ENCODE measurements at regions of chr10 and their contacts with region 1.

Region 1: DNA sequence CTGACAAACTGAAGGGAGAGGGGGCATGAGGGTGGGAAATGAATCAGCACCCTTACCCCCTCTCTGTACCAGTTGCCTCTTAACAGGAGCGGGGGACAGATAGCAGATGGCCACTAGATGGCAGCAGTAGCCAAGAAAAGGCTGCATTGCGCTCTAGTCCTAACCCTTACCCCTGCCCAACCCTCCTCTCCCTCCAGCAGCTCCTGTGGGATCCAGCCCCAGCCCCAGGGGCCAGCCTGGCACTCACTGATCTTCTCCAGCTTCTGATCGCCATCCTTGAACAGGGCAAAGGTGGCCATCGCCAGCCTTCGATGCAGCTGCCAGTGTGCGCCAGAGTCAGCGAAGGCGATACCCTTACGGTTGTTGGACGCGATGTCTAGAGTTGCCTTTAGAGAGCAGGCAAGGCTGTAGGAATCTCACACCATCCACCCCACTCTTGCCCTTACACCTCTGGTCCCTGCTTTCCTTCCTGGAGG is 2.2 kb downstream of the CYP17A1 start:
- DNase-seq: peak; percentile 79 to 90
- H3K4me3 ChIP-seq: no peak overlapping the region
- H3K4me1 ChIP-seq: no peaks in the 10 kb centered on the region
- H3K27me3 ChIP-seq: no peaks in the 10 kb centered on the region

Region 2: DNA sequence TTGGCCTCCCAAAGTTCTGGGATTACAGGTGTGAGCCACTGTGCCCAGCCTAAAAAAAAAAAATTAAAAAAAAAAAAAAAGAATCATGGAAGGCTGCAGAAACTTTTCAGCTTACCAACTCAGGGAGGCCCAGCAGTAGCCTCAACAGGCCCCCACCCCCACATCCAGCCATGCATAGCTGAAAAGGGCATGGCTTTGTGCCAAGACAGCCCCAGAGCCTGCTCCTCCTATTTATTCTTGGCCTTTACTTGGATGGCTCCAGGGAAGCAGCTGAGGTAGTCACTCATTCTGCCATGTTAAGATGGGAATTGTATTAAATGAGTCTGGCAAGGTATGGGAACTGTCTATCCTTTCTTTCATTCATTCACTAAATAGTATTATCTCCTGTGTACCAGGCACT is 69.3 kb after region 1 on chr10:
- in situ Hi-C with region 1: loop called (anchors 5 kb)
- DNase-seq: no peak
- H3K4me3 ChIP-seq: no peak overlapping the region
- H3K4me1 ChIP-seq: no peaks in the 10 kb centered on the region
- H3K27me3 ChIP-seq: no peaks in the 10 kb centered on the region

Region 3: GRCh38 chr10:103069453-103070331 is 234.6 kb after region 1 on chr10:
- in situ Hi-C with region 1: loop called (anchors 5 kb)
- DNase-seq: peak; percentile 39 to 77
- H3K4me3 ChIP-seq: no peak overlapping the region
- H3K4me1 ChIP-seq: no peaks in the 10 kb centered on the region
- H3K27me3 ChIP-seq: no peaks in the 10 kb centered on the region

Region 4: DNA sequence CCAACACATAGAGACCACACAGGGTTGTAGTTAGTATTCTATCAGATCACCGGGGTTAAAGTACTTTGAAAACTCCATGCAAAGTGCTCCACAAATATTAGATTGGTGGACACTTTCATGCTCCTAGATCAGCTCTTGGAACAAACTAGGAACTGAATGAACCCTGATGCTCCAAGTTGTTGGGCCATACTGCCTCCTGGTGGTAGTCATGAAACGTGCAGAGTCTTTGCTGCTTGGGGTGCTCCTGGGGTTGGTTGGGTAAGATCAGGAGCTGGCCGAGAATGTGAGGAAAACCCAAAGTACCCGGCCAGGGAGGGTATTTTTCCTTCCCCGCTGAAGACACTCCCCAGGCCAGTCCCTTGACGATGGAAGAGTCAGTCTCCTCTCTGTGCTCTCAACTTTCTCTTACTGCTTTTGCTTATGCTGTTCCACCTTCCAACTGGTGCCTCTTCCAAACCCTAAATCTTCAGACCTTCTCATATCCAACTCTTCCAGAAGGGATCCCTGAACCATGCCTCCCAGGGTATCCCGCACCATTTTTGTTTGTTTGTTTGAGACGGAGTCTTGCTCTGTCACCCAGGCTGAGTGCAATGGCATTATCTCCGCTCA is 409.7 kb after region 1 on chr10:
- in situ Hi-C with region 1: loop called (anchors 10 kb)
- DNase-seq: peak; percentile 64 to 81
- H3K4me3 ChIP-seq: no peak overlapping the region
- H3K4me1 ChIP-seq: no peaks in the 10 kb centered on the region
- H3K27me3 ChIP-seq: no peaks in the 10 kb centered on the region

Region 5: DNA sequence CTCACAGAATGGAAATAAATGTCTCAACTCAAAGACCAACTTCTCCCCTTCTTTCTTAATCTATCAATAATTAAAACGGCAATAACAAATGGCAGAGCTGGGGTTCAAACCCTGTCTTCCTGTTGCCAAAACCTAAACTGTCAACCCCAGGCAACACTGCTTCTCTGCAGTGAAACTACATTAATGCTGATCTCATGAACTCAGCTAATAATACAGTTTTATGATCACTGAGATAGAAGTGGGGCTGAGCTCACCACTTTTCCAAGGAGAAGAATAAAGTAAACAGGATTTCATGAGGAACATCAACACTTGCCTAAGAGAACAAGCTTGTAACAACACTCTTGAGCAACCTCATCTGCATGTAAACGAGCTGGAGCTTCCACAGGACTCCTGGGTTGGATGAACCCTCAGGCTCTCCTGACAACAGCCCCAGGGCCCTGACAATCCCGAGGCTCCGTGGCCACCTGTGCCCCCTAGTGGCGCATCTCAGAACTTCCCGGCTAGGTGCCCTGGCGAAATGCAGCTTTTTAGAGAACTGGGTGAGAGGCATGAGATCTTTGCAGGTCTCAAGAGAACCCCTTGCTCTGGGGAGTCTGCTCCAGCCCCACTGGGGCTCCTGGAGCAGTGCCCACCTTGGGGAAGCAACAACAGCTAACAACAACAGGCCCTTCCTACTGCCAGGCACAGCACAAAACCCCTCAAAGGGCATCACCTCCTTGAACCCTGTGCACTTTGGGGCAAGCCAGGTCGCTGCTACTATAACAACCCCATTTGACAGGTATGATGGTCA is 851.0 kb after region 1 on chr10:
- in situ Hi-C with region 1: no loop called
- DNase-seq: peak; percentile 27 to 83
- H3K4me3 ChIP-seq: no peak overlapping the region
- H3K4me1 ChIP-seq: no peaks in the 10 kb centered on the region
- H3K27me3 ChIP-seq: no peaks in the 10 kb centered on the region